ENCODE measurements at regions of chr1 and their contacts with region 1.

Region 1: DNA sequence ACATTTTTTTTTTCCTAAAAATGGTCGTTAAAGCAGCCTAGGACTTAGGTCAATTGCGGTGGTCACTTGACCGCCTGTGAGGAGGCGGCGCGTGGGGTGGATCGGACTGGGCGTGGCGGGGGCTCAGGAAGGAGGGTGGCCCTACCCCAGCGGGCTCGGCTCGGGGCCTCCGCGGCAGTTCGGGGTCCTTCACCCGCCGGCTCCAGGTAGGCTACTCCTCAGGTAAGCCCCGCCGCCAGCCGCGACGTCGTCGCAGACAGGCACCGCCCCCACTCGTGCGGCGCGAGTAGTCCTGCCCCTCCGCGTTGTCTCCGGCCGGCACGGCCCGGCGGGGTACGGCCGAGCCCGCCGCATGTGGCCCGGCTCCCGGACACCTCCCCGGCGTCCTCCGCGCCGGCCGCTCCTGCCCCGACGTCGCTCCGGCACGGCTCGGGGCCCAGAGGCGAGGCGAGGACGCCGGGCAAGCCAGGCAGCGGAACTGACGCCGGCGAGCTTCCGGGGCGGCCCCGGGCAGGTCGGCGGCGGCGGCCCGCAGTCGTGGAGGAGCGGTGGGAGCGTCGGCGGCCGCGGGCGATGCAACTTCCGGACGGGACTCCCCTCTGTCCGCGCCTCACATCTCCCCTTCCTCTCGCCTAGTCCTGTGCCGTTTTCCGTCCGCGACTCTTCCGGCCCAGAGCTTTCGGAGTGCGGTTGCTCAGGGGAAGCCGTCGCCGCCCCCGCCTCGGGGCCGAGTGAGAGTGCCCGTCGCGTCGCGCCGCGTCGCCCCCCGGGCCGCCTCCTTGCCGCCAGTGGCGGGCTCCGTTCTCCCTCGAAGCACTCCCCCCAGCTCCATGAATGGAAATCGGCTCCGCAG is at the start of gene AGO3:
- DNase-seq: peak; percentile 85
- H3K4me3 Mint-ChIP-seq: peak within 1 kb of the TSS; percentile 82
- H3K27ac Mint-ChIP-seq: peak within 1 kb of the TSS; percentile 93
- H3K4me1 Mint-ChIP-seq: peaks cover 19% of the 10 kb centered on the region
- H3K27me3 Mint-ChIP-seq: no peaks in the 10 kb centered on the region
- CTCF ChIP-seq: no peak
- total RNA-seq, gene AGO3: 27.3 and 31.6 TPM in 2 replicates

Region 2: DNA sequence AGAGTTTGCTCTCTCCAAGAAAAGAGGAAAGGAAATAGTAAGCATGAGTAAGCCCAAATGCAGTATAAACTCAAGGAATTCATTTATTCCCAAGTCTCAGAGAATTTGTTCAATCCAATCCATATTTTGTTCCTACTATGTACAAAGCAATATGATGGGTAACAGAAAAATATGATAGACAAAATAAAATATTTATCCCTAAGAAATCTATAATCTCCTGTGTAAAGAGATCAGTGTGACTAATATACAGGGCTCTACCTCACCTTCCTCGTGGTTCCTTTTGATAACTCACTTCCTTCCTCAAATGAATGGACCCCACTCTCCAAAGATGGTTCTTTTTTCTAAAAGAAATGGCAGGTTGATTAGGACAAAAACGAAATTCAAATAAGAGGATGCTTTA is 168.7 kb before region 1 on chr1:
- CTCF ChIA-PET with region 1: no interaction called
- POLR2A ChIA-PET with region 1: no interaction called
- intact Hi-C with region 1: no loop called
- DNase-seq: no peak
- H3K4me3 Mint-ChIP-seq: no peak overlapping the region
- H3K27ac Mint-ChIP-seq: no peak overlapping the region
- H3K4me1 Mint-ChIP-seq: peaks cover 8% of the 10 kb centered on the region
- H3K27me3 Mint-ChIP-seq: no peaks in the 10 kb centered on the region
- CTCF ChIP-seq: no peak

Region 3: GRCh38 chr1:35882945-35883634 is 47.7 kb before region 1 on chr1 and contains the start of gene AGO1:
- CTCF ChIA-PET with region 1: interaction called, 5 read pairs
- POLR2A ChIA-PET with region 1: interaction called, 25 read pairs
- intact Hi-C with region 1: loop called (anchors 2 kb)
- DNase-seq: peak; percentile 94
- H3K4me3 Mint-ChIP-seq: peak within 1 kb of the TSS; percentile 94
- H3K27ac Mint-ChIP-seq: peak within 1 kb of the TSS; percentile 90
- H3K4me1 Mint-ChIP-seq: peaks cover 18% of the 10 kb centered on the region
- H3K27me3 Mint-ChIP-seq: no peaks in the 10 kb centered on the region
- CTCF ChIP-seq: peak; percentile 88
- total RNA-seq, gene AGO1: 13.5 and 15.7 TPM in 2 replicates

Region 4: DNA sequence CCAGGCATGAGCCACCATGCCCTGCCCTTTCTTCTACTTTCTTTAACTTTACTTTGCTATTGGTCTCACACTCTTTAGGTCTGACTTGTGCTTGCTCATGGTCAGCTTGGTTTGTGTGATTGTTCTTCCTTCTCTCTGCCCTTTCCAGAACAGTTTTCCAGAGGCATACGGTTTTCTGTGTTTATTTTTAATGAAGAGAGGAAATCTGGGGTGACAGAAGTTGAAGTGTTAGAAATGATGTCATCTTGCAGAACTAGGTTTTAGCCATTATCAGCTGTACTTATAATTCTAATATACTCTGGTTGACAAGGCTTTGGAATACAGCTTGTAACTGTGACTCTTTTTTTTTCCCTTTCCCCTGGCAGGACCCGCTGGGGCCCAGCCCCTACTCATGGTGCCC is 14.5 kb after region 1 on chr1:
- CTCF ChIA-PET with region 1: interaction called, 5 read pairs
- POLR2A ChIA-PET with region 1: interaction called, 15 read pairs
- intact Hi-C with region 1: no loop called
- DNase-seq: no peak
- H3K4me3 Mint-ChIP-seq: no peak overlapping the region
- H3K27ac Mint-ChIP-seq: no peak overlapping the region
- H3K4me1 Mint-ChIP-seq: peaks cover 7% of the 10 kb centered on the region
- H3K27me3 Mint-ChIP-seq: no peaks in the 10 kb centered on the region
- CTCF ChIP-seq: no peak

Region 5: GRCh38 chr1:36088575-36089443 is 158.0 kb after region 1 on chr1 and contains the start of gene ADPRS:
- CTCF ChIA-PET with region 1: no interaction called
- POLR2A ChIA-PET with region 1: no interaction called
- intact Hi-C with region 1: loop called (anchors 2 kb)
- DNase-seq: peak; percentile 82
- H3K4me3 Mint-ChIP-seq: peak within 1 kb of the TSS; percentile 75
- H3K27ac Mint-ChIP-seq: peak within 1 kb of the TSS; percentile 82
- H3K4me1 Mint-ChIP-seq: no peaks in the 10 kb centered on the region
- H3K27me3 Mint-ChIP-seq: no peaks in the 10 kb centered on the region
- CTCF ChIP-seq: peak; percentile 99
- total RNA-seq, gene ADPRS: 24.8 and 26.4 TPM in 2 replicates